ENCODE measurements at regions of chr19 and their contacts with region 1.

Region 1: GRCh38 chr19:18281082-18282020 is at the start of gene JUND:
- DNase-seq: peak; percentile 98
- H3K4me3 ChIP-seq: peak within 1 kb of the TSS; percentile 86
- H3K27ac ChIP-seq: peak within 1 kb of the TSS; percentile 100
- H3K4me1 ChIP-seq: peaks cover 23% of the 10 kb centered on the region
- H3K27me3 ChIP-seq: no peaks in the 10 kb centered on the region
- CTCF ChIP-seq: no peak
- total RNA-seq, gene JUND: 128 and 136 TPM in 2 replicates

Region 2: GRCh38 chr19:17824339-17824738 is 457.0 kb before region 1 on chr19:
- CTCF ChIA-PET with region 1: no interaction called
- POLR2A ChIA-PET with region 1: no interaction called
- intact Hi-C with region 1: no loop called
- DNase-seq: no peak
- H3K4me3 ChIP-seq: no peak overlapping the region
- H3K27ac ChIP-seq: no peak overlapping the region
- H3K4me1 ChIP-seq: no peaks in the 10 kb centered on the region
- H3K27me3 ChIP-seq: no peaks in the 10 kb centered on the region
- CTCF ChIP-seq: no peak

Region 3: GRCh38 chr19:18058208-18059030 is 222.9 kb before region 1 on chr19:
- CTCF ChIA-PET with region 1: no interaction called
- POLR2A ChIA-PET with region 1: no interaction called
- intact Hi-C with region 1: no loop called
- DNase-seq: peak; percentile 88
- H3K4me3 ChIP-seq: peak overlapping the region; percentile 30
- H3K27ac ChIP-seq: peak overlapping the region; percentile 20
- H3K4me1 ChIP-seq: peaks cover 6% of the 10 kb centered on the region
- H3K27me3 ChIP-seq: no peaks in the 10 kb centered on the region
- CTCF ChIP-seq: peak; percentile 95

Region 4: DNA sequence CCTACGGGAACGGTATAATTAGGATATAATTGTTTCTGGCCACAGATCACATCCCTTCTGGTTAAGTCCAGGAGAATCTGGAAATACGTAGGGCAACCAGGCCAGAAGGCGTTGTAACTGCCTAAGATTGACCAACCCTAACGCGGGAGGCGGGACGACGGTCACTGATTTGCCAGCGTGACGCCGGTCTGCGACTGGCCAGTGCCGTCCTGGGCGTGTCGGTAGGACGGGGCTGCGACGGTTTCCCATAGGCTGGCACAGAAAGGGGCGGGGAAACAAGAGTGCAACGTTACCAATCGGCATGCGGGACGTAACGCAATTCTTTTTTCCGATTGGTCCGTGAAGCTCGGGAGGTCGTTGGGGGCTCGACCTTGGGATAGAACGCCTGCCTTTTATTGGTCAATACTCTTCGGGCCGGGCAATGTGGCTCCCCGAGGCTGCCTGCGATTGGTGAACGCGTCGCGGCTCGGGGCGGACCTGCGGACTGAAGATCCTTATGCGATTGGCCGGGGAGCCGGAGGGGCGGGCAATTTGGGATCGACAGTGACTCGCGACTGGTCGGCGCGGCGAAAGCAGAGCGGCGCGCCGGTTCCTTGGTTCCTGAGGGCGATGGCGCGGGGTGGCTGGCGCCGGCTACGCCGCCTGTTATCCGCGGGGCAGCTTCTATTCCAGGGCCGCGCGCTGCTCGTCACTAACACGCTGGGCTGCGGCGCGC is 88.5 kb before region 1 on chr19 and contains the start of gene MPV17L2:
- CTCF ChIA-PET with region 1: interaction called, 12 read pairs
- POLR2A ChIA-PET with region 1: interaction called, 9 read pairs
- intact Hi-C with region 1: no loop called
- DNase-seq: peak; percentile 100
- H3K4me3 ChIP-seq: peak within 1 kb of the TSS; percentile 65
- H3K27ac ChIP-seq: peak within 1 kb of the TSS; percentile 82
- H3K4me1 ChIP-seq: peaks cover 15% of the 10 kb centered on the region
- H3K27me3 ChIP-seq: no peaks in the 10 kb centered on the region
- CTCF ChIP-seq: no peak
- total RNA-seq, gene MPV17L2: 20.2 and 21.3 TPM in 2 replicates

Region 5: GRCh38 chr19:18304458-18305310 is 23.3 kb after region 1 on chr19:
- CTCF ChIA-PET with region 1: interaction called, 18 read pairs
- POLR2A ChIA-PET with region 1: interaction called, 9 read pairs
- intact Hi-C with region 1: no loop called
- DNase-seq: peak; percentile 81
- H3K4me3 ChIP-seq: peak overlapping the region; percentile 5
- H3K27ac ChIP-seq: peak overlapping the region; percentile 90
- H3K4me1 ChIP-seq: peaks cover 17% of the 10 kb centered on the region
- H3K27me3 ChIP-seq: no peaks in the 10 kb centered on the region
- CTCF ChIP-seq: no peak

Region 6: GRCh38 chr19:18328340-18329034 is 47.1 kb after region 1 on chr19:
- CTCF ChIA-PET with region 1: interaction called, 44 read pairs
- POLR2A ChIA-PET with region 1: interaction called, 27 read pairs
- intact Hi-C with region 1: loop called (anchors 1 kb)
- DNase-seq: peak; percentile 99
- H3K4me3 ChIP-seq: peak overlapping the region; percentile 29
- H3K27ac ChIP-seq: peak overlapping the region; percentile 35
- H3K4me1 ChIP-seq: peaks cover 15% of the 10 kb centered on the region
- H3K27me3 ChIP-seq: no peaks in the 10 kb centered on the region
- CTCF ChIP-seq: peak; percentile 94

Region 7: GRCh38 chr19:18408053-18408476 is 126.7 kb after region 1 on chr19:
- CTCF ChIA-PET with region 1: interaction called, 13 read pairs
- POLR2A ChIA-PET with region 1: no interaction called
- intact Hi-C with region 1: no loop called
- DNase-seq: peak; percentile 56
- H3K4me3 ChIP-seq: no peak overlapping the region
- H3K27ac ChIP-seq: no peak overlapping the region
- H3K4me1 ChIP-seq: no peaks in the 10 kb centered on the region
- H3K27me3 ChIP-seq: no peaks in the 10 kb centered on the region
- CTCF ChIP-seq: peak; percentile 72